CD8-positive, alpha-beta memory T cell (primary cell): ENCODE measurements at regions of chr17 and their contacts with region 1.

Region 1: DNA sequence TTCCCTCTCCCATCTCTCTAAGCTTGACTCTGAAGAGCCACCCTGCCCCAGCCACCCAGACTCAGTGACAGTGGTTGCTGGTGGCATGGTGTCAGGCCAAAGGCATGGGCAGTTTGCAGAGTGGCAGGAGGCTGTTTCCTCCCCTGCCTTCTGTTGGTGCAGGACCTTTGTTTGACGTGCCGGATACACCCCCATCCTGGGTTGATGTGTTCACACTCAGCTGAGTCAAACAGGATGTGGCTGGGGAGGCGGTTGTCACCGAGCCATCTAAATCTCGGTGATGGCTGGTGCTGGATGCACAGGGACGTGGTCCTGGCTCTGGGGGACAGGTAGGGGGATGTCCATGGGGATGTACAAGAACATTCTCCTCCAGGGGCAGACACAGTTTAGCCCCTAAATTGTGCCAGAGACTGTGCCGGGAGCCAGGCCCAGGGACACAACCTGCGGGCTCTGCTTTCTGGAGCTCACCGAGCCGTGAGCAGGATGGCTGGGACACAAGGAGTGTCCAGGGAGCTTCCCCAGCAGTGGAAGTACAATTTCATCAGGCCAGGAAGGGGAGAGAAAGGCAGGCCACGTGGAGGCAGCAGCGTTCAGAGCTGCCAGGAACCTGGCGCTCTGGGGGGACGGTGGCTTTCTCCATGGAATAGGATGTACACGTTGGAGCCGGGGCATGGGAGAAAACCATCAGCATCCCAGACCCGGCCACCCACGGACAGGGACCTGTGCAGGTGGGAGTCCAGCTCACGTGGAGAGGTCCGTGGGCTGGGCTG is 264.2 kb downstream of the SEC14L1 start:
- DNase-seq: peak; percentile 69 to 92 (median 83)
- H3K4me3 ChIP-seq: peak overlapping the region; percentile 89
- H3K4me3 Mint-ChIP-seq: peak overlapping the region; percentile 84 to 99 (median 96)
- H3K27ac ChIP-seq: peak overlapping the region; percentile 48
- H3K27ac Mint-ChIP-seq: peak overlapping the region; percentile 88 to 99 (median 98)
- H3K4me1 ChIP-seq: peaks cover 93% of the 10 kb centered on the region
- H3K4me1 Mint-ChIP-seq: peaks cover 80 to 98% (median 89%) of the 10 kb centered on the region in 3 donors
- H3K27me3 ChIP-seq: no peaks in the 10 kb centered on the region
- H3K27me3 Mint-ChIP-seq: peaks cover 0 to 3% of the 10 kb centered on the region in 2 donors

Region 2: GRCh38 chr17:77382966-77383612 is 21.9 kb before region 1 on chr17:
- CTCF ChIA-PET with region 1: interaction called, 113 read pairs
- POLR2A ChIA-PET with region 1: interaction called, 15 read pairs
- DNase-seq: no peak
- H3K4me3 ChIP-seq: peak overlapping the region; percentile 62
- H3K4me3 Mint-ChIP-seq: peak overlapping the region; percentile 32 to 91 (median 78)
- H3K27ac ChIP-seq: no peak overlapping the region
- H3K27ac Mint-ChIP-seq: peak overlapping the region; percentile 87 to 96 (median 91)
- H3K4me1 ChIP-seq: peaks cover 94% of the 10 kb centered on the region
- H3K4me1 Mint-ChIP-seq: peaks cover 81 to 95% (median 88%) of the 10 kb centered on the region in 3 donors
- H3K27me3 ChIP-seq: no peaks in the 10 kb centered on the region
- H3K27me3 Mint-ChIP-seq: no peaks in the 10 kb centered on the region

Region 3: DNA sequence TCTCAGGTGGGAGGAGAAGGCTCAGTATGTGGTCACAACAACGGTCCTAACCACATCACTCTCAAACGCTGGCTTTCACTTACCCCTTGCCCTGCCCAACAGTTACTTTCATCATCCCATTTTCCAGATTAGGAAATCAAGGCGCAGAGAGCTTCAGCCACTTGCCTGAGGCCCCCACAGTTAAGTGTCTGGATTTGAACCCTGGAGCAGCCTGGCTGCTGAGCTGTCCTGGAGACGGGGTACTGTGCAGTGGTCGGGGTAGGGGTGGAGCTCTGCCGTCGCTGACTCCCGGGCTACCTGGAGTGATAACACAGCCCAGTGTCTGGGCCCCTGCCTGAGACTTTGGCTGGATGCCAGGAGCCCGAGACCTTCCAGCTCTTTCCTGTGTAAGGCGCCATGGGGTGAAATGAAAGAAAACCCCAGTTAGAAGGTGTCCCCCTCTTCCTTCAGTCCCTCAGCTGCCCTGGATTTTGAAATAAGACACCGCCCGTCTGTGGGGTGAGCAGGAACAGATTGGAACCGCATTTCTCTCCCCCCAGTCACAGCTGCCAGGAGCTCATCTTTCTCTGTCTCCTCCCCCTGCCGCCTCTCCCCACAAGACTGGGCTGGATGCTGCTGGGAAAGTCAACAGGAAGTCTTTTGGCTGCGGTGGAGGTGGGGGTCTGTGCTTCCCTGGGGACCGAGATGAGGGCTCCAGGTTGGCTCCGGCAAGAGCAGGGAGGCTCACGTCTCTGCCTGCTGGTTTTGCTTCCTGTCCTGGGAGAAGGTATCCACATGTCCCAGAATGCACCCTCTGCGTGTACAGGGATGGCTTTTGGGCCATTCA is 16.0 kb after region 1 on chr17:
- CTCF ChIA-PET with region 1: interaction called, 21 read pairs
- POLR2A ChIA-PET with region 1: interaction called, 7 read pairs
- DNase-seq: peak; percentile 53 to 74 (median 62)
- H3K4me3 ChIP-seq: peak overlapping the region; percentile 10
- H3K4me3 Mint-ChIP-seq: peak overlapping the region; percentile 31 to 81 (median 73)
- H3K27ac ChIP-seq: peak overlapping the region; percentile 44
- H3K27ac Mint-ChIP-seq: peak overlapping the region; percentile 66 to 96 (median 94)
- H3K4me1 ChIP-seq: peaks cover 62% of the 10 kb centered on the region
- H3K4me1 Mint-ChIP-seq: peaks cover 43 to 86% (median 53%) of the 10 kb centered on the region in 3 donors
- H3K27me3 ChIP-seq: no peaks in the 10 kb centered on the region
- H3K27me3 Mint-ChIP-seq: no peaks in the 10 kb centered on the region

Region 4: GRCh38 chr17:77444984-77445759 is 40.2 kb after region 1 on chr17:
- CTCF ChIA-PET with region 1: interaction called, 20 read pairs
- POLR2A ChIA-PET with region 1: interaction called, 11 read pairs
- DNase-seq: peak; percentile 72 to 96 (median 94)
- H3K4me3 ChIP-seq: peak overlapping the region; percentile 66
- H3K4me3 Mint-ChIP-seq: peak overlapping the region; percentile 68 to 84 (median 81)
- H3K27ac ChIP-seq: peak overlapping the region; percentile 71
- H3K27ac Mint-ChIP-seq: peak overlapping the region; percentile 87 to 100 (median 98)
- H3K4me1 ChIP-seq: peaks cover 100% of the 10 kb centered on the region
- H3K4me1 Mint-ChIP-seq: peaks cover 89 to 97% (median 97%) of the 10 kb centered on the region in 3 donors
- H3K27me3 ChIP-seq: no peaks in the 10 kb centered on the region
- H3K27me3 Mint-ChIP-seq: peaks cover 0 to 5% of the 10 kb centered on the region in 2 donors

Region 5: GRCh38 chr17:77471984-77472461 is 67.0 kb after region 1 on chr17:
- CTCF ChIA-PET with region 1: interaction called, 10 read pairs
- POLR2A ChIA-PET with region 1: no interaction called
- DNase-seq: no peak
- H3K4me3 ChIP-seq: peak overlapping the region; percentile 35
- H3K4me3 Mint-ChIP-seq: peak overlapping the region; percentile 7 to 92 (median 64)
- H3K27ac ChIP-seq: peak overlapping the region; percentile 12
- H3K27ac Mint-ChIP-seq: peak overlapping the region; percentile 67 to 96 (median 86)
- H3K4me1 ChIP-seq: peaks cover 98% of the 10 kb centered on the region
- H3K4me1 Mint-ChIP-seq: peaks cover 91 to 99% (median 92%) of the 10 kb centered on the region in 3 donors
- H3K27me3 ChIP-seq: no peaks in the 10 kb centered on the region
- H3K27me3 Mint-ChIP-seq: no peaks in the 10 kb centered on the region